ENCODE measurements at regions of chrX and their contacts with region 1.

Region 1: DNA sequence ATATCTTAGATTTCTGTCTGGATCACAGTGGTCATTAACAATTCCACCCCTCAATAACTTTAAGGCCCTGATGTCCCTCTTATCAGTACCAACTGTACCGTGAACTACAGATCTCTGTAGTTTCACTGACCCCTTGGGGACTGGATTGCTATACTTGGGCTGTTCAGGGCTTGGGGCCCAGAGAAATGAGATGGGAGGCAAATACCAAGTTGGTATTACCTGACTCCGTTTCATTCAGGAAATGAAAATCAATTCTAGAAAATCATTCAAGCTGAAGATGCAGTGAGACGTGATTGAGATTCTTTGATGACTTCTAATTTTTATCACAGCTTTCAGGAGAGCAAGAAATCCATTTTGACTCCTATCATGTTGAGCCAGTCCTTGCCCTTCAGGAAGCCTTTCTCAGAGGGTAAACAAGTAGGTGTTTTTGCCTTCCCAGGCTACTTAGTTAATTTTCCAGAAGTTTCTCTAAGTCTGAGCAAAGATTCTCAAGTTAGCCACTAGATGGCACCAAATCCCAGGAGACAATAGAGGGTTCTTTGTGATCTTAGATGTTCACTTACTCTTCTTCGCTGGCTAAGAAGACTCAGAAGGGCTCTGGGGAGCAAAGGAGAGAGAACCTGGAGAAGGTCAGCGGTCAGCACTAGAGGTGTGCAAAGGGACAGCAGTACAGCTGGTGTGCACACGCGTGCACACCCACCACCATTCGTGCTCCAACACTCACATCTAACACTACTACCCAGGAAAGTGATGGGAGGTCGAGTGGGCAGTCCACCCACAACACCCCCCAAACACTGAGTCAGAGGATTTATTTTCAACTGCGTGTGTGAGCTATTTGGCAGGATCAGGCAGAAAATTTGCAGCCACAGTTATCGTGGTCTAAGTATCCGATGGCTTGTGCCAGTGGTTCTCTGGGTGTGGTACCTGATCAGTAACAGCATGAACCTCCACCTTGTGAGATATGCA is 7.4 kb downstream of the HNRNPH2 start:
- DNase-seq: peak; percentile 75 to 89 (median 84)
- H3K4me3 ChIP-seq: no peak overlapping the region
- H3K27ac ChIP-seq: no peak overlapping the region
- H3K4me1 ChIP-seq: peaks cover 0 to 19% (median 7%) of the 10 kb centered on the region in 4 experiments
- H3K27me3 ChIP-seq: peaks cover 0 to 13% (median 0%) of the 10 kb centered on the region in 5 experiments

Region 2: GRCh38 chrX:101383679-101384205 is 31.7 kb before region 1 on chrX:
- CTCF ChIA-PET with region 1: no interaction called
- POLR2A ChIA-PET with region 1: no interaction called
- DNase-seq: peak in 2 of 3 donors; percentile 47 to 53
- H3K4me3 ChIP-seq: peak overlapping the region in 2 of 7 experiments; percentile 52 to 56
- H3K27ac ChIP-seq: no peak overlapping the region
- H3K4me1 ChIP-seq: peaks cover 10 to 35% (median 17%) of the 10 kb centered on the region in 4 experiments
- H3K27me3 ChIP-seq: no peaks in the 10 kb centered on the region

Region 3: DNA sequence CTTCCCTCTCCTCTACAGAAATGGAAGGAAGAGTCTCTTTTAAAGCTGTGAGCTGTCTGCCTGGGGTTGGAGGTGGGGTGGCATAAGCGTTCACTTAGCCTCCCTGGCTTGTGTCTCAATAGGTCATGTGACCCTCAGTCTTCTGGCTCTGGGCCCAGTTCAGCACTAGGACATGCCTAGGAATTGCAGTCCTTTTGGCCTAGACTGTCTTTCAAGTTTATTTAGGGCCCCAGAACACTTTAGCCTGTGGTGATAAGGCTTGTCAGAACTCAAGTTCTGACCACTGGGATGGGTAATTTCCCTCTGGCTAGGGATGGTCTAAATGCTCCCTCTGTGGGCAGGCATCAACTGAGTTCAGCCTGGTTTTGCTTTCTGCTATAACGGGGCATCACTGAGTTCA is 35.5 kb after region 1 on chrX:
- CTCF ChIA-PET with region 1: no interaction called
- POLR2A ChIA-PET with region 1: no interaction called
- DNase-seq: peak in 1 of 3 donors; percentile 10
- H3K4me3 ChIP-seq: no peak overlapping the region
- H3K27ac ChIP-seq: no peak overlapping the region
- H3K4me1 ChIP-seq: no peaks in the 10 kb centered on the region
- H3K27me3 ChIP-seq: no peaks in the 10 kb centered on the region

Region 4: GRCh38 chrX:101595739-101596419 is 180.4 kb after region 1 on chrX:
- CTCF ChIA-PET with region 1: interaction called, 18 read pairs
- POLR2A ChIA-PET with region 1: no interaction called
- DNase-seq: peak; percentile 69 to 83 (median 81)
- H3K4me3 ChIP-seq: no peak overlapping the region
- H3K27ac ChIP-seq: no peak overlapping the region
- H3K4me1 ChIP-seq: no peaks in the 10 kb centered on the region
- H3K27me3 ChIP-seq: peaks cover 0 to 6% (median 2%) of the 10 kb centered on the region in 5 experiments